Dorsolateral prefrontal cortex (tissue), 120 donors: ENCODE measurements at regions of chr1 and their contacts with region 1.

Region 1: DNA sequence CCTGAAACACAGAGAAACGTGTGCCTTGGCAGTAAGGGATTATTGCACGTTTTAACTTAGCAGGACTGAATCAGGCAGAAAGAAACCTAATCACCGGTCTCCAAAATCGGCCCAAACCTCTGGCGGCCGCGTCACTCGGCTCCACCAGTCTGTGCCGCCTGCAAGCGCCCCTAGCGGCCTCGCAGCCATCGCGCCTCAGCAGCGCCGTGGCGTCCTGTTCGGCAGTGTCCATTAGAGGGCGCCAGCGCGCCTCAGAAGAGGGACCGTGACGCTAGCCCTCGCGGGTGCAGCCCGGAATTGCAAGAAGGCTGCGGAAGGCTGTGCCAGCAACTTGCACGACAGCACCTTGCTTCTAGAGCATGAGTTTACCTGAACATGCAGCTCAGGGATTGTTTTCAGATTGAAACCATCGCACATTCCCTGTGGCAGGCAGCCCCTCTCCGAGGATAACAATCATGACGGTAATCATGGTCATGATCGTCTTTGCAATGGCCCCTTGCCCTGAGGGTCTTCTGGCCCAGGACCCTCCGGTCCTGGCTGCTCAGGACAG is 164.4 kb downstream of the TRIM33 start:
- DNase-seq: peak; percentile 91 to 98 (median 94)
- H3K4me3 ChIP-seq: peak overlapping the region; percentile 42 to 82 (median 63)
- H3K27ac ChIP-seq: peak overlapping the region in 56 of 59 donors; percentile 10 to 92 (median 76)
- H3K27me3 ChIP-seq: no peaks in the 10 kb centered on the region
- CTCF ChIP-seq: peak; percentile 96 to 100 (median 100)

Region 2: DNA sequence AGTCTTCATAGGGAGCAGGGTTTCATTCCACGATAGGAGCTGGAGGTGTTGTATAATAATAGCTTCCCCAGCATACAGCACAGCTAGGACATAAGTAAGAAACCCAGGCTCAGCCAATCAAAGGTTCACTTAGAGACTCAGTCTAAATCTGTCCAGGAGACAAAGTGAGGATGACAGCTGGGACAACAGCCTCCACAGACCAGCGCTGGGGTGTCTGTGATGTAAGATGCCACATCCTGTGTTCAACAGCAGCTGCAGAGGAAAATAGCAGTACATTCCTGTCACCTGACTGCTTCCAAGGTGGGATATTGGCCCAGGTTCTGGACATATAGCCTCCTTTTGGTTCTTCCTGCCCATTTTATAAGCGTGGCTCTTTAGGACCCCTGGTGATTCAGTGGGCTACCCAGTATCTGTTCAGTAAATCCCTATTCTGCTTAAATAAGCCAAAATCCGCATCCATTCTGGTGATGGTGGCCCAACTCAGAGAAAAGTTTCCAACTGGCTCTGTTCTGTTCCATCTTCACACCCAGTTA is 16.0 kb before region 1 on chr1:
- intact Hi-C with region 1: no loop called
- DNase-seq: peak in 2 of 10 donors; percentile 52 to 61
- H3K4me3 ChIP-seq: no peak overlapping the region
- H3K27ac ChIP-seq: peak overlapping the region in 23 of 59 donors; percentile 3 to 78 (median 49)
- H3K27me3 ChIP-seq: peaks cover 0 to 14% (median 0%) of the 10 kb centered on the region in 45 donors
- CTCF ChIP-seq: no peak

Region 3: GRCh38 chr1:114511032-114511785 is 164.7 kb after region 1 on chr1 and contains the start of gene TRIM33:
- intact Hi-C with region 1: loop called (anchors 5 kb)
- DNase-seq: peak; percentile 76 to 93 (median 88)
- H3K4me3 ChIP-seq: peak within 1 kb of the TSS; percentile 54 to 100 (median 94)
- H3K27ac ChIP-seq: peak within 1 kb of the TSS; percentile 38 to 99 (median 95)
- H3K27me3 ChIP-seq: no peaks in the 10 kb centered on the region
- CTCF ChIP-seq: peak in 23 of 56 donors; percentile 2 to 53 (median 21)
- total RNA-seq, gene TRIM33: 39.0 to 71.8 (median 55.0) TPM

Region 4: DNA sequence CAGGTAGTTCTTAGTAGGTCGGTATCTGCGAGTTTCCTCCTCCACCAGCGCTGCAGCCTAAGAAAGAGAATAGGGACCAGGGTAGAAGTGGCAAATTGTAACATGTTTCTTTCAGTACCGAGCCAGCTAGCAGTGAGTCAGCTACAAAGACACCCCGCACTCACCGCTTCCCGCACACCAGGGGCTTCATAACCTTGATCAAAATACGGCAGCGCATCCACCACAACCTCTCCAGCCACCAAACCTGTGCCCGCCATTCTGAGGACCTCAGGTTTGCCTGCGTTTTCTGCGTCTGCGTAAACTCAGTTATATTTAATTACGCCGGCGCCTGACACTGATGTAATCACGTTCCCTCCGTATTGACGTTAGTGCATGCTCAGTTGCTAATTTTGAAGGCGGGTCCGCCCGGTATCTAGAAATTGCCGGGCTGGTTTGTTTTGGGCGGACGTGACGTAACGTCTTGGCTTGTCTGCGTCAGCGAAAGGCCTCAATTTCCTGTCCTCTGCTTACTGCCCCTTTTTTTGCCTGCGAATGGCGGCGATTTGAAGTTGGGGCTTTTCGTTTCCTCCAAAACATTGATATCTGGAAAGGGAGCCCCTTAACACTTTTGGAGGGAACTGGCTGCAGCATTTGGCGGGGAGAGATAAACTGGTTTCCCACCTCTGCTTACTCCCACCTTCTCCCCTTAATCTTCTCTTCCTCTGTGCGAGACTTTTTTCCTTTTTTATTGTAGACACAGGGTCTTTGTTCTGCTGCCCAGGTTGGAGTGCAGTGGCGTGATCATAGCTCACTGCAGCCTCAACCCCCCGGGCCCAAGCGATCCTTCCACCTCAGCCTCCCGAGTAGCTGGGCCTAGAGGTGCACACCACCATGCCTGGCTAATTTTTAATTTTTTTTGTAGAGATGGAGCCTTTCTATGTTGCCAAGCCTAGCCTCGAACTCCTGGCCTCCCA is 235.1 kb after region 1 on chr1 and contains the start of gene BCAS2:
- intact Hi-C with region 1: loop called (anchors 5 to 10 kb)
- DNase-seq: peak; percentile 92 to 99 (median 96)
- H3K4me3 ChIP-seq: peak within 1 kb of the TSS; percentile 50 to 99 (median 80)
- H3K27ac ChIP-seq: peak within 1 kb of the TSS; percentile 57 to 98 (median 91)
- H3K27me3 ChIP-seq: no peaks in the 10 kb centered on the region
- CTCF ChIP-seq: peak in 22 of 56 donors; percentile 5 to 32 (median 18)
- total RNA-seq, gene BCAS2: 20.3 to 90.8 (median 49.2) TPM

Region 5: GRCh38 chr1:114757455-114758250 is 411.1 kb after region 1 on chr1 and contains the start of gene CSDE1:
- intact Hi-C with region 1: loop called in 1 of 2 experiments (anchors 5 kb)
- DNase-seq: peak; percentile 93 to 98 (median 96)
- H3K4me3 ChIP-seq: peak within 1 kb of the TSS; percentile 66 to 100 (median 95)
- H3K27ac ChIP-seq: peak within 1 kb of the TSS; percentile 95 to 100 (median 99)
- H3K27me3 ChIP-seq: no peaks in the 10 kb centered on the region
- CTCF ChIP-seq: peak in 41 of 56 donors; percentile 3 to 50 (median 27)
- total RNA-seq, gene CSDE1: 340 to 487 (median 404) TPM